AG04449 (cell line): ENCODE measurements at regions of chr6 and their contacts with region 1.

Region 1: GRCh38 chr6:83505356-83505755 is 7.0 kb upstream of the PRSS35 start:
- DNase-seq: no peak
- H3K4me3 ChIP-seq: no peak overlapping the region
- CTCF ChIP-seq: no peak

Region 2: DNA sequence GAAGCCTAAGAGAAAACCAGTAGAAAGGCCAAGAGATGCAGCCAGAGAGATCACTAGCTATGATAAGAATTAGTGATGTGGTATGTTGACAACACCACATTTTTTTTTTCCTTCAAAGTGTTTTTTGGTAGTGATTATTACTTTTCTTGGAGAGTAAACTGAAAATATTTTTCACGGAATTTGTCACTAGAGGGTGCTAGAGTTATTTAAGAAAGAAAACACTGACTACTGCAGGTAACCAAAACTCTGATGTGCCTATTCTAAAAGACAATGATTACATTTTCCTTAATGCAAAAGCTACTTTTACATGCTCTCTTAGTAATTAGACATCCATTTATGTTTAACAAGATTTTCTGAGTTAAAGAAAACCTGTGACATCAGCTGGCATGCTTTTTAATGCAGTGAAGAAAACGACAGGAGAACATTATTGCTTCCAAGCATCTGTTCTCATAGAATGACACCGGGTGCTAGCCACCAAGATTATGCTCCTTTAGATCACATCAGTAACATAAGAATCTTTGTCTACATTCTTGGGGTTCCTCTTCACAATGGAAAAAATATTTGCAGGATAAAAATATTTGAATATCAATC is 283.4 kb before region 1 on chr6:
- CTCF ChIA-PET with region 1: interaction called, 488 read pairs
- POLR2A ChIA-PET with region 1: no interaction called
- DNase-seq: no peak
- H3K4me3 ChIP-seq: no peak overlapping the region
- CTCF ChIP-seq: peak; percentile 4